ENCODE measurements at regions of chr3 and their contacts with region 1.

Region 1: GRCh38 chr3:197298341-197298857 is at the start of gene DLG1:
- DNase-seq: peak; percentile 98
- H3K4me3 Mint-ChIP-seq: peak within 1 kb of the TSS; percentile 94
- H3K27ac Mint-ChIP-seq: peak within 1 kb of the TSS; percentile 97
- H3K4me1 Mint-ChIP-seq: peaks cover 14% of the 10 kb centered on the region
- H3K27me3 Mint-ChIP-seq: no peaks in the 10 kb centered on the region
- CTCF ChIP-seq: no peak
- total RNA-seq, gene DLG1: 121 and 129 TPM in 2 replicates

Region 2: GRCh38 chr3:196932600-196932999 is 365.8 kb before region 1 on chr3:
- CTCF ChIA-PET with region 1: no interaction called
- POLR2A ChIA-PET with region 1: no interaction called
- intact Hi-C with region 1: no loop called
- DNase-seq: no peak
- H3K4me3 Mint-ChIP-seq: no peak overlapping the region
- H3K27ac Mint-ChIP-seq: no peak overlapping the region
- H3K4me1 Mint-ChIP-seq: no peaks in the 10 kb centered on the region
- H3K27me3 Mint-ChIP-seq: no peaks in the 10 kb centered on the region
- CTCF ChIP-seq: no peak

Region 3: GRCh38 chr3:197283045-197283444 is 15.4 kb before region 1 on chr3:
- CTCF ChIA-PET with region 1: no interaction called
- POLR2A ChIA-PET with region 1: interaction called, 12 read pairs
- intact Hi-C with region 1: no loop called
- DNase-seq: no peak
- H3K4me3 Mint-ChIP-seq: no peak overlapping the region
- H3K27ac Mint-ChIP-seq: no peak overlapping the region
- H3K4me1 Mint-ChIP-seq: peaks cover 6% of the 10 kb centered on the region
- H3K27me3 Mint-ChIP-seq: no peaks in the 10 kb centered on the region
- CTCF ChIP-seq: no peak

Region 4: DNA sequence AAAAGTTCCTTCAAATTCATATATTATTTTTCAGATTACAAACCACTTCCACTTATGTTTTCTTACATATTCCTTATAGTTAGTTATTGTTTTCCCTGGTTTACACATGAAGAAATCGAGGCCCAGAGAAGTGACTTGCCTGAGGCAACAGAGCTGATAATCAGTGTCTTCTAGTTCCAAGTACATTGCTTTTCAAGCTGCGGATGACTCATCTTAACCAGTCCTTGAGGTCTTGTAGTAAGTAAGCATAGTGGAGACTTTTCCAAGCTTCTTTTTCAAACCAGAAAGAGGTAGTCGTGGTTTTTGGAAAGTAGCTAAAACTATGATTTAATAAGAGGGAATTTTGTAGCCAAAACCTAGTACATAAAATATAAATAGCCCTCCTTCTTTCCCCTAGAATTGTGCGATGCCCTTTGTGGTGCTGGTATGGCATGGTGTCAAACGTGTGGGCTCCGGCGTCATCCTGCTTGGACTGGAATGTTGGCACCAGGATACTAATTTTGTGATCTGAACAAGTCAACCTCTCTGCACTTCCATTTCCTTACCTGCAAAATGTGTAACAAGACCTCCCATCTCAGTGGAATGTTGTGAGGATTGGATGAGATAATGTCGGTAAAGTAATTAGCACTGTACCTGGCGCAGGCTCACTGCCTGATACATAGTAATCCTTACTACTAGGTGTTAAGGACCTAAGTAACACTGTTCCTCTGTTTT is 19.0 kb after region 1 on chr3:
- CTCF ChIA-PET with region 1: interaction called, 3 read pairs
- POLR2A ChIA-PET with region 1: interaction called, 49 read pairs
- intact Hi-C with region 1: no loop called
- DNase-seq: peak; percentile 95
- H3K4me3 Mint-ChIP-seq: peak overlapping the region; percentile 66
- H3K27ac Mint-ChIP-seq: peak overlapping the region; percentile 73
- H3K4me1 Mint-ChIP-seq: peaks cover 25% of the 10 kb centered on the region
- H3K27me3 Mint-ChIP-seq: no peaks in the 10 kb centered on the region
- CTCF ChIP-seq: no peak

Region 5: DNA sequence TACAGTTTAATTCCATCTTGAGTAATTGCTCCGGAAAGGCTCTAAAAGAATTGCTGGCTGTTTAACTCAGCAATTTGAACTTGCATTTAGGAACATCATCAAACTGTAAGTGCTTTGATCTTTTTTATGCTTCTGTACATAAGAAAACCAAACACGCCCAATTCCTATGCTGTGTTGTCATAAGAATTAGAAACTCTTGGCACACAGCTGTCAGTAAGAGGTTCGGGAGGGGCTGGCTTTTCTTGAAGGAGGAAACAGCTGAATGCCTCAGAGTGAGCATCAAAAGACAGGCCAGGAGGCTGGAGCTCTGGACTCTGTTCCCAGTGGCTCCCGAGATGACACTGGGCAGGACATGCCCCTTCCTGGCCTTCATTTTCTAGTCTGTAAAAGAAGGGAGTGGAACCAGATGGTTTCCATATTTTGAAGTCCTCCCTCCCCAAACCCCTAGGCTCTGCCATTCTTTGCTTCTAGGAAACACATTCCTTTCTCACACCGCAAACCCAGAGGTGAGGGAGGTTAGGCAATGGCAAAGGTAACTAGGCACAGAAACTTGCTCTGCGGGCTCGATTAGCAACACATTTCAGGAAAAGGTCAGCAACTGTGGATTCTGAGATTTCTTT is 73.8 kb after region 1 on chr3:
- CTCF ChIA-PET with region 1: no interaction called
- POLR2A ChIA-PET with region 1: interaction called, 36 read pairs
- intact Hi-C with region 1: loop called (anchors 5 kb)
- DNase-seq: peak; percentile 89
- H3K4me3 Mint-ChIP-seq: peak overlapping the region; percentile 19
- H3K27ac Mint-ChIP-seq: peak overlapping the region; percentile 75
- H3K4me1 Mint-ChIP-seq: peaks cover 44% of the 10 kb centered on the region
- H3K27me3 Mint-ChIP-seq: no peaks in the 10 kb centered on the region
- CTCF ChIP-seq: no peak

Region 6: GRCh38 chr3:197428117-197428801 is 129.9 kb after region 1 on chr3:
- CTCF ChIA-PET with region 1: no interaction called
- POLR2A ChIA-PET with region 1: no interaction called
- intact Hi-C with region 1: no loop called
- DNase-seq: peak; percentile 30
- H3K4me3 Mint-ChIP-seq: no peak overlapping the region
- H3K27ac Mint-ChIP-seq: no peak overlapping the region
- H3K4me1 Mint-ChIP-seq: peaks cover 23% of the 10 kb centered on the region
- H3K27me3 Mint-ChIP-seq: peaks cover 20% of the 10 kb centered on the region
- CTCF ChIP-seq: no peak

Region 7: GRCh38 chr3:197456261-197457091 is 158.1 kb after region 1 on chr3:
- CTCF ChIA-PET with region 1: interaction called, 3 read pairs
- POLR2A ChIA-PET with region 1: interaction called, 9 read pairs
- intact Hi-C with region 1: loop called (anchors 5 kb)
- DNase-seq: peak; percentile 85
- H3K4me3 Mint-ChIP-seq: peak overlapping the region; percentile 72
- H3K27ac Mint-ChIP-seq: peak overlapping the region; percentile 91
- H3K4me1 Mint-ChIP-seq: peaks cover 11% of the 10 kb centered on the region
- H3K27me3 Mint-ChIP-seq: no peaks in the 10 kb centered on the region
- CTCF ChIP-seq: no peak

Region 8: GRCh38 chr3:197501879-197502620 is 203.7 kb after region 1 on chr3:
- CTCF ChIA-PET with region 1: interaction called, 3 read pairs
- POLR2A ChIA-PET with region 1: interaction called, 20 read pairs
- intact Hi-C with region 1: loop called (anchors 2 kb)
- DNase-seq: peak; percentile 96
- H3K4me3 Mint-ChIP-seq: no peak overlapping the region
- H3K27ac Mint-ChIP-seq: no peak overlapping the region
- H3K4me1 Mint-ChIP-seq: peaks cover 9% of the 10 kb centered on the region
- H3K27me3 Mint-ChIP-seq: no peaks in the 10 kb centered on the region
- CTCF ChIP-seq: peak; percentile 89

Region 9: GRCh38 chr3:197541756-197542539 is 243.5 kb after region 1 on chr3:
- CTCF ChIA-PET with region 1: no interaction called
- POLR2A ChIA-PET with region 1: no interaction called
- intact Hi-C with region 1: no loop called
- DNase-seq: no peak
- H3K4me3 Mint-ChIP-seq: no peak overlapping the region
- H3K27ac Mint-ChIP-seq: no peak overlapping the region
- H3K4me1 Mint-ChIP-seq: peaks cover under 1% of the 10 kb centered on the region
- H3K27me3 Mint-ChIP-seq: no peaks in the 10 kb centered on the region
- CTCF ChIP-seq: no peak

Measured in MCF 10A (cell line).